Spleen (tissue), 13 donors: ENCODE measurements at regions of chr14 and their contacts with region 1.

Region 1: GRCh38 chr14:23567192-23568020 is at the start of gene AP1G2:
- DNase-seq: peak; percentile 98
- H3K4me3 ChIP-seq: peak within 1 kb of the TSS; percentile 56 to 93 (median 67)
- H3K27ac ChIP-seq: peak within 1 kb of the TSS; percentile 74 to 94 (median 86)
- H3K4me1 ChIP-seq: peaks cover 5 to 76% (median 40%) of the 10 kb centered on the region in 6 donors
- H3K27me3 ChIP-seq: peaks cover 0 to 7% (median 0%) of the 10 kb centered on the region in 7 donors
- CTCF ChIP-seq: no peak
- POLR2A ChIP-seq: peak in 1 of 3 donors; percentile 73
- total RNA-seq, gene AP1G2: 139 to 261 (median 193) TPM

Region 2: GRCh38 chr14:23387916-23388882 is 179.2 kb before region 1 on chr14:
- intact Hi-C with region 1: no loop called
- DNase-seq: no peak
- H3K4me3 ChIP-seq: no peak overlapping the region
- H3K27ac ChIP-seq: no peak overlapping the region
- H3K4me1 ChIP-seq: no peaks in the 10 kb centered on the region
- H3K27me3 ChIP-seq: peaks cover 0 to 24% (median 0%) of the 10 kb centered on the region in 7 donors
- CTCF ChIP-seq: no peak
- POLR2A ChIP-seq: no peak

Region 3: GRCh38 chr14:23478111-23478759 is 89.2 kb before region 1 on chr14:
- intact Hi-C with region 1: loop called (anchors 5 kb)
- DNase-seq: no peak
- H3K4me3 ChIP-seq: no peak overlapping the region
- H3K27ac ChIP-seq: no peak overlapping the region
- H3K4me1 ChIP-seq: peaks cover 0 to 16% (median 0%) of the 10 kb centered on the region in 6 donors
- H3K27me3 ChIP-seq: no peaks in the 10 kb centered on the region
- CTCF ChIP-seq: peak in 10 of 11 experiments; percentile 29 to 72 (median 68)
- POLR2A ChIP-seq: no peak